Activated CD8-positive, alpha-beta memory T cell treated with anti-CD3 and anti-CD28 coated beads, Interleukin-2, amount 10 ng/mL, durations not matched to agents 7 days and 5 days (primary cell): ENCODE measurements at regions of chrX and their contacts with region 1.

Region 1: GRCh38 chrX:154748712-154749343 is 2.0 kb downstream of the GAB3 start:
- DNase-seq: peak; percentile 68
- ATAC-seq: peak; percentile 69
- H3K4me3 Mint-ChIP-seq: peak overlapping the region; percentile 84
- H3K27ac Mint-ChIP-seq: peak overlapping the region; percentile 72
- H3K4me1 Mint-ChIP-seq: peaks cover 42% of the 10 kb centered on the region
- H3K27me3 Mint-ChIP-seq: peaks cover 2% of the 10 kb centered on the region

Region 2: DNA sequence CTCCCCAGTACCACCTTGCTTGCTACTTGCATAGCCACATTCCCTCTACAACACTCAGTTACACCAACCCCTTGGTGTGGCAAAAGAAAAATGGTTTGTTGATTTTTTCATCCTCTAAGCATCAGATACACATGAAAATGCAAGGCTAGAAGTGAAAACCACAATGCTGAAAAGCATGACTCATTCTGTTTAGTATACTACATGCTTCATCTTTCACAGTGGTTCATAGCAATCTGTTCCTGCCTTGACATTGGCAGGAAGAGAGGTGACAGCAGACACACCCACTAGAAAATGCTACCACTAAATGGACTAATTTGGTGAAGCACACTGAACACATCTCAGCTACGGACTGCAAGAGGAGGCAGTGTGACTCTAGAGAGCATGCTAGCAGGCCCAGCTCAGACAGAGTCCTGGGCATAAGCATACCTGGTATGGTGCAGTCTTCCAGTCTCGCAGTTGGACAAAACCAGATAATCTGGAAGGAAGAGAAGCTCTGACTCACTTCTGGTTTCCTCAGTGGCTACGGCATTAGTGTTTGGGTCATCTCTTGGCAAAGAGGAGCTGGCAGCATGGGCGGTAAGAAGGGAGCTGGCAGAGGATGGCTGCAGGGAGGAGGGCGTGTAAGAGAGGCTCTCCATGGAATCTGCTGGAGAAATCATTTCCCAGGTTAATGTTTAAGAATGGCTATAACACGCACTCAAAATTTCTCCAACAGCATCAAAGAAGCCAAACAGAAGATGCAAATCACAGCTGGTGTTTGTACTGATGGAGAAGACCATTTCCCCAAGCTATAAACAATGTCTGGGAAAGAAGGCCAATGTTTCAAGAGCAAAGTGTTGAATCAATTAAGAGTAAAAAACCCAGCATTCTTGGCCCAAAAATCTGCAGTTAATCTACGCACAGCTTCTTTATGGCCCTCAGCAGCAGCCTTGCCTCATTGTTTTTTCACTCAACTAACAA is 35.8 kb before region 1 on chrX:
- CTCF ChIA-PET with region 1: interaction called, 65 read pairs
- DNase-seq: peak; percentile 69
- ATAC-seq: peak; percentile 94
- H3K4me3 Mint-ChIP-seq: peak overlapping the region; percentile 64
- H3K27ac Mint-ChIP-seq: peak overlapping the region; percentile 89
- H3K4me1 Mint-ChIP-seq: peaks cover 72% of the 10 kb centered on the region
- H3K27me3 Mint-ChIP-seq: no peaks in the 10 kb centered on the region

Region 3: GRCh38 chrX:154724993-154725756 is 23.7 kb before region 1 on chrX:
- CTCF ChIA-PET with region 1: interaction called, 93 read pairs
- DNase-seq: no peak
- ATAC-seq: peak; percentile 73
- H3K4me3 Mint-ChIP-seq: peak overlapping the region; percentile 50
- H3K27ac Mint-ChIP-seq: peak overlapping the region; percentile 93
- H3K4me1 Mint-ChIP-seq: peaks cover 90% of the 10 kb centered on the region
- H3K27me3 Mint-ChIP-seq: no peaks in the 10 kb centered on the region

Region 4: GRCh38 chrX:154734061-154734781 is 14.6 kb before region 1 on chrX:
- CTCF ChIA-PET with region 1: interaction called, 93 read pairs
- DNase-seq: peak; percentile 63
- ATAC-seq: peak; percentile 62
- H3K4me3 Mint-ChIP-seq: peak overlapping the region; percentile 74
- H3K27ac Mint-ChIP-seq: peak overlapping the region; percentile 99
- H3K4me1 Mint-ChIP-seq: peaks cover 95% of the 10 kb centered on the region
- H3K27me3 Mint-ChIP-seq: no peaks in the 10 kb centered on the region

Region 5: GRCh38 chrX:154762523-154763289 is 13.9 kb after region 1 on chrX and contains the start of gene DKC1:
- CTCF ChIA-PET with region 1: interaction called, 20 read pairs
- DNase-seq: peak; percentile 97
- ATAC-seq: peak; percentile 91
- H3K4me3 Mint-ChIP-seq: peak within 1 kb of the TSS; percentile 84
- H3K27ac Mint-ChIP-seq: peak within 1 kb of the TSS; percentile 94
- H3K4me1 Mint-ChIP-seq: peaks cover 48% of the 10 kb centered on the region
- H3K27me3 Mint-ChIP-seq: no peaks in the 10 kb centered on the region
- total RNA-seq, gene DKC1: 81.0 to 116 TPM

Region 6: DNA sequence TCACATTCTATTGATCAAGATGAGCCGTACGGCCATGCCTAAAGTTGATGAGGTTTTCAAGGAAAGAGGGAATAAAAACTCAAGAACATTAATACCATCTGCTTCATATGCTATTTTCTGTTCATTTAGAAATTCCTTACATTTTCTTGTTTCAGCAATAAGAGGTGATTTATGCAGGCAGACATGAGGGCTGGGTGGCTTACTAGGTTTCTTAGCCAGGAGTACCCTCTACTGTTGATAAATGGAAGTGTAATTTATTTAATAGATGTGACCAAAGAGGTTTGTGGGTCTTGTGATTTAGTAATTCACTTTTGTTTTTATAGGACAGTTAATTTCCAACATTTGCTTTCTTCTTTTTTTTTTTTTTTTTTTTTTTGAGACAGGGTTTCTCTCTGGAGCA is 92.0 kb after region 1 on chrX:
- CTCF ChIA-PET with region 1: interaction called, 21 read pairs
- DNase-seq: no peak
- ATAC-seq: peak; percentile 45
- H3K4me3 Mint-ChIP-seq: no peak overlapping the region
- H3K27ac Mint-ChIP-seq: no peak overlapping the region
- H3K4me1 Mint-ChIP-seq: peaks cover 10% of the 10 kb centered on the region
- H3K27me3 Mint-ChIP-seq: no peaks in the 10 kb centered on the region

Region 7: DNA sequence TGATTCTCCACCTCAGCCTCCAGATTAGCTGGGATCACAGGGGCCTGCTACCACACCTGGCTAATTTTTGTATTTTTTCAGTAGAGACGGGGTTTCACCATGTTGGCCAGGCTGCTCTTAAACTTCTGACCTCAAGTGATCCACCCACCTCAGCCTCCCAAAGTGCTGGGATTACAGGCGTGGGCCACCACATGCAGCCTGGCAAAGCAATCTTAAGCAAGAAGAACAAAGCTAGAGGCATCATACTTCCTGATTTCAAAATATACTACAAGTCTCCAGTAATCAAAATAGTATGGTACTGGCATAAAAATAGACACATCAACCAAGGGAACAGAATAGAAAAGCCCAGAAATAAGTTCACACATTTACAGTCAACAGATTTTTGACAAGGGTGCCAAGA is 124.5 kb after region 1 on chrX:
- CTCF ChIA-PET with region 1: no interaction called
- DNase-seq: no peak
- ATAC-seq: no peak
- H3K4me3 Mint-ChIP-seq: no peak overlapping the region
- H3K27ac Mint-ChIP-seq: no peak overlapping the region
- H3K4me1 Mint-ChIP-seq: no peaks in the 10 kb centered on the region
- H3K27me3 Mint-ChIP-seq: peaks cover 3% of the 10 kb centered on the region